ENCODE measurements at regions of chr2 and their contacts with region 1.

Region 1: DNA sequence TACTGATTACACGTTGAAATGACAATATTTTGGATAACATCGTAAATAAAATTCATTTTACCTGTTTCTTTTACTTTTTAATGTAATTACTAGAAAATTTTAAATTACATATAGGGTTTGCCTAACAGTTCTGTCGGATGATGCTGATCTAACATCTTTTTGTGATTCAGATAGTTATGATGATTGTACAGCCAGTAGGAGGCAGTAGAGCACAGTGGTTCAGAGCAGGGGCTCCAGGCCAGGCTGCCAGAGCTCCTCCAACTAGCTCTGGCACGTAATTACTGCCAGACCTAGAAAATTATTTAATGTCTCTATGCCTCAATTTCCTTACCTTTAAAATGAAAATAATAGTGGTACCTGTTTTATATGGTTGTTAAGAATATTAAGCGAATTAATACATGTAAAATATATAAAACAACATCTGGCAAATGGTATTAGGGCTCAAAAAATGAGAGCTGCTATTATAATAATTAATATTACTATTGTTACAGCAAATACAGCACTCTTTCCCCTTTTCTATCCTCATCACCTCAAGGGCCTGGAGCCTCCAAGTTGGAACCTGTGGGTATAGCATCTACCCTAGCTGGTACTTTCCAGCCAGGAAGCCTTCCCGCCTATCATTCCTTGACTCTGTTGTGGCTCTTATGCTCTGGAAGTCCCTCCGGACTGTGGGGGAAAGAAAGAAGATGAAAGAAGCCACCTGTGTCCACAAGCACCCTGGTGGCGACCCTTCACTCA is 47.7 kb upstream of the PLA2R1 start:
- DNase-seq: peak; percentile 83
- H3K4me3 ChIP-seq: no peak overlapping the region
- H3K27ac ChIP-seq: no peak overlapping the region
- H3K4me1 ChIP-seq: no peaks in the 10 kb centered on the region
- H3K27me3 ChIP-seq: no peaks in the 10 kb centered on the region
- CTCF ChIP-seq: peak; percentile 66 to 72
- POLR2A ChIP-seq: no peak

Region 2: GRCh38 chr2:160224060-160224459 is 114.0 kb after region 1 on chr2:
- CTCF ChIA-PET with region 1: interaction called, 10 read pairs
- POLR2A ChIA-PET with region 1: no interaction called
- dilution Hi-C with region 1: no loop called
- intact Hi-C with region 1: no loop called
- DNase-seq: peak; percentile 87
- H3K4me3 ChIP-seq: peak overlapping the region in 1 of 3 experiments; percentile 41
- H3K27ac ChIP-seq: peak overlapping the region; percentile 95
- H3K4me1 ChIP-seq: peaks cover 80% of the 10 kb centered on the region
- H3K27me3 ChIP-seq: no peaks in the 10 kb centered on the region
- CTCF ChIP-seq: no peak
- POLR2A ChIP-seq: no peak

Region 3: DNA sequence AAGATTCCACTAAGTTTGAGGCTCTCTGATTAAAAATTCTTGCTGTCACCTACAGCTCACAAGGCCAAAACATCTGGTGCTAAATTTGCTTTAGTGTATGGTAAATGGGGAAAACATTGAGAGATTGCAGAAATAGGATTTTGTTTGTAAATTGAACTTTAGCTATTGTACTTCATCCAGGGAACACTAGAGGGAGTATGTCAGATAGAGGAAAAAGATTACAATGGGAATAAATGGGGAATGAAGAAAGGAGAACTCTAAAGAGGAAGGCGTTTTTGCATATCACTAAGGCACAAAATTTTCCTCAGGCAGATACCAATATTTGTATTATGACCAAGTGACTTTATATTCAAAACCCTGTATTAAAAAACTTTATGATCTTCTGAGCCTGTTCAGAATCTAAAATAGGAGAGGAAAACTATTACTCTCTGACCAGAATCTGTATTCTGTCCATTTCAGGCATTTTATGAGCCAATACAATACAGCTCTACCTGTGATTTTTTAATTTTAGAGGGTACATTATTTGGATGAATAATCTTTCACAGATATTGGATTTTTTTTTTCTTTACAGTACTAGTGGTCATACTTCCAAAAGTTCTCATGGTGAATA is 142.3 kb after region 1 on chr2:
- CTCF ChIA-PET with region 1: interaction called, 28 read pairs
- POLR2A ChIA-PET with region 1: no interaction called
- dilution Hi-C with region 1: no loop called
- intact Hi-C with region 1: loop called (anchors 10 kb)
- DNase-seq: peak; percentile 58
- H3K4me3 ChIP-seq: no peak overlapping the region
- H3K27ac ChIP-seq: no peak overlapping the region
- H3K4me1 ChIP-seq: no peaks in the 10 kb centered on the region
- H3K27me3 ChIP-seq: no peaks in the 10 kb centered on the region
- CTCF ChIP-seq: peak; percentile 52 to 57
- POLR2A ChIP-seq: no peak

Region 4: DNA sequence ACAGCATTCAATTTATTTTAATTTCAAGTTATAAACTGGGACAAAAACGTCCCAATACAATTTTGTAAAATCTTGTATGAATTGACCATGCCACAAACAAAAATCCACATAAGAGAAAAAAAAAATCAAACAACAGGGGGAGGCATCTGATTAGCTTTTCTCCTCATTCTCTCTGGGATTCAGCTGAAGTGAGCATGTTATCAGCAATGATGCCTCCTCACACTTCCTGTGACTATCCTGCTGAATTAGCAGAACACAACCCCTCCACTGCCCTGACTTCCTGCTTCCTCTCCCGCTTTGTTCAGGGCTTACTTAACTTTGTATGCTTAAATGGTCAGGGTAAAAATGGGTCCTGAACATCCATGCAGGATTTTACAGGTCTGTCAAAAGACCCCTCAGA is 222.2 kb after region 1 on chr2:
- CTCF ChIA-PET with region 1: interaction called, 3 read pairs
- POLR2A ChIA-PET with region 1: no interaction called
- dilution Hi-C with region 1: no loop called
- intact Hi-C with region 1: loop called (anchors 5 kb)
- DNase-seq: peak; percentile 70
- H3K4me3 ChIP-seq: no peak overlapping the region
- H3K27ac ChIP-seq: no peak overlapping the region
- H3K4me1 ChIP-seq: peaks cover 35% of the 10 kb centered on the region
- H3K27me3 ChIP-seq: no peaks in the 10 kb centered on the region
- CTCF ChIP-seq: peak in 1 of 2 donors; percentile 1
- POLR2A ChIP-seq: no peak

Region 5: GRCh38 chr2:160994141-160995002 is 884.3 kb after region 1 on chr2:
- CTCF ChIA-PET with region 1: interaction called, 50 read pairs
- POLR2A ChIA-PET with region 1: no interaction called
- dilution Hi-C with region 1: no loop called
- intact Hi-C with region 1: loop called (anchors 1 kb)
- DNase-seq: peak; percentile 86
- H3K4me3 ChIP-seq: no peak overlapping the region
- H3K27ac ChIP-seq: no peak overlapping the region
- H3K4me1 ChIP-seq: peaks cover 2% of the 10 kb centered on the region
- H3K27me3 ChIP-seq: no peaks in the 10 kb centered on the region
- CTCF ChIP-seq: peak; percentile 58 to 70
- POLR2A ChIP-seq: no peak